ENCODE measurements at regions of chr19 and their contacts with region 1.

Region 1: DNA sequence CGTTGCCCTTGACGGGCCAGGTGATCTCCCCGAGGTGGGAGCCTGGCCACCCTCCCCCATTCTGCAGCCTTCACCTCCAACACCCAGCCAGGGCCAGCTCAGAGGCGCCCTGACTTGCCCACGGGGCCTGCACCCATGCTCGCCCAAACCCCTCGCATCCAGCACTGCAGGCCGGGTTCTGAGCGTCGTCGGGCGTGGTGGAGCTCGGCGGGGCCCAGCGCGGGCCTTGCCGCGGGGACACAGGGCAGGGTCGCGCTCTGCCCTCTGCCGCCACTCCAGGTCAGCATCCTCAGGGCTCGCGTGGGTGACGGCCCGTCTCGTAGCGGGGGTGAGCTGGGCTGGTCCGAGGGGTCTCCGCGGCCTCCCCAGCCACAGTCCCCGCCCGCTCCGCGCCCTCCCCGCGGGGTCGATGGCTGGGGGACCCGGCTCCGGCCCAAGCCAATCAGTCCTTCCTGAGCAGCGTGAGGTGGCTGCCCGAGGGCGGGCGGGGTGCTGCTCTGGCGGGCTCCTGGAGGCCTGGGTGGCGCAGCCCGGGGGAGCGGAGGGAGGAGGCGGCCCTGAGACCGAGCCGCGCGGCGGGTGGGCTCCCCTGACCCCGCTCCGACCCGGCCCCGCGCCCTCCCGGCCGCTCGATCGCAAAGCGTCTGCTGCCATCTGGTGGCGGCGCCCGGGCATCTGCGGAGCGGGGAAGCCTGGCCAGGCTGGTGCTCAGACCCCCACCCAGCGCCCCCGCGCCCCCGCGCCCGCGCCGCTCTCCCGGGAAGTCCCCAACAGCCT is 61.4 kb downstream of the CCNE1 start:
- DNase-seq: peak; percentile 72
- ATAC-seq: peak; percentile 84
- H3K4me3 Mint-ChIP-seq: peak overlapping the region; percentile 59
- H3K27ac Mint-ChIP-seq: no peak overlapping the region
- H3K4me1 Mint-ChIP-seq: peaks cover 10% of the 10 kb centered on the region
- H3K27me3 Mint-ChIP-seq: peaks cover 13% of the 10 kb centered on the region
- CTCF ChIP-seq: peak; percentile 98

Region 2: DNA sequence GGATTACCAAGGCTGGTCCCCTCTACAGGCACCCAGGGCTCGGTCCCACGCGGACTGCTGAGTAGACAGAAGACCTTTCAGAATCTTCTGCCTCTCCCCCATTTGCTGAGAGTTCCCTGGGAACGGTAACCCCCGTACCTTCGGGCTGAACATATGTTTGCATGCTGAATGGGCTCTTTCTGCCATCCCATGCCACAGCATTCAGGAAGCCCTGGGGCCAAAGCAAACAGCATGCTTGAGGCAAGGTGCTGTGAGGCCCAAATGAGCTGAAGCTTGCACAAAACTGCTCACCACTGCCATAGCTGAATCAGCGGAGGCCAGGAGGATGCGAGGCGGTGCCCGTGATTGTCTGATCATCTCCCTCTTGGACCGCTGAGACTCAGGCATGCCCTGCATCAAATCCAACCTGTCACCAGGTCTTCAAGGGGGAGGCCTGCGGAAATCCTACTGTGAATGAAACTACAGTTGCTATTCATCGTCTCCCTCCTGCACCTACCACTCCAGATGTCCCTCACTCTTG is 141.8 kb before region 1 on chr19:
- CTCF ChIA-PET with region 1: interaction called, 69 read pairs
- POLR2A ChIA-PET with region 1: no interaction called
- intact Hi-C with region 1: loop called (anchors 5 kb)
- DNase-seq: no peak
- ATAC-seq: no peak
- H3K4me3 Mint-ChIP-seq: no peak overlapping the region
- H3K27ac Mint-ChIP-seq: no peak overlapping the region
- H3K4me1 Mint-ChIP-seq: no peaks in the 10 kb centered on the region
- H3K27me3 Mint-ChIP-seq: peaks cover 2% of the 10 kb centered on the region
- CTCF ChIP-seq: no peak

Region 3: GRCh38 chr19:29761575-29762232 is 111.5 kb before region 1 on chr19:
- CTCF ChIA-PET with region 1: interaction called, 78 read pairs
- POLR2A ChIA-PET with region 1: interaction called, 3 read pairs
- intact Hi-C with region 1: loop called (anchors 10 kb)
- DNase-seq: no peak
- ATAC-seq: no peak
- H3K4me3 Mint-ChIP-seq: no peak overlapping the region
- H3K27ac Mint-ChIP-seq: no peak overlapping the region
- H3K4me1 Mint-ChIP-seq: peaks cover 2% of the 10 kb centered on the region
- H3K27me3 Mint-ChIP-seq: no peaks in the 10 kb centered on the region
- CTCF ChIP-seq: no peak

Region 4: GRCh38 chr19:29771708-29772414 is 101.4 kb before region 1 on chr19:
- CTCF ChIA-PET with region 1: interaction called, 14 read pairs
- POLR2A ChIA-PET with region 1: no interaction called
- intact Hi-C with region 1: loop called (anchors 10 kb)
- DNase-seq: peak; percentile 34
- ATAC-seq: no peak
- H3K4me3 Mint-ChIP-seq: no peak overlapping the region
- H3K27ac Mint-ChIP-seq: no peak overlapping the region
- H3K4me1 Mint-ChIP-seq: no peaks in the 10 kb centered on the region
- H3K27me3 Mint-ChIP-seq: peaks cover 2% of the 10 kb centered on the region
- CTCF ChIP-seq: peak; percentile 47

Region 5: GRCh38 chr19:29785955-29786589 is 87.1 kb before region 1 on chr19:
- CTCF ChIA-PET with region 1: interaction called, 15 read pairs
- POLR2A ChIA-PET with region 1: interaction called, 3 read pairs
- intact Hi-C with region 1: no loop called
- DNase-seq: peak; percentile 35
- ATAC-seq: peak; percentile 68
- H3K4me3 Mint-ChIP-seq: no peak overlapping the region
- H3K27ac Mint-ChIP-seq: no peak overlapping the region
- H3K4me1 Mint-ChIP-seq: no peaks in the 10 kb centered on the region
- H3K27me3 Mint-ChIP-seq: no peaks in the 10 kb centered on the region
- CTCF ChIP-seq: no peak

Region 6: DNA sequence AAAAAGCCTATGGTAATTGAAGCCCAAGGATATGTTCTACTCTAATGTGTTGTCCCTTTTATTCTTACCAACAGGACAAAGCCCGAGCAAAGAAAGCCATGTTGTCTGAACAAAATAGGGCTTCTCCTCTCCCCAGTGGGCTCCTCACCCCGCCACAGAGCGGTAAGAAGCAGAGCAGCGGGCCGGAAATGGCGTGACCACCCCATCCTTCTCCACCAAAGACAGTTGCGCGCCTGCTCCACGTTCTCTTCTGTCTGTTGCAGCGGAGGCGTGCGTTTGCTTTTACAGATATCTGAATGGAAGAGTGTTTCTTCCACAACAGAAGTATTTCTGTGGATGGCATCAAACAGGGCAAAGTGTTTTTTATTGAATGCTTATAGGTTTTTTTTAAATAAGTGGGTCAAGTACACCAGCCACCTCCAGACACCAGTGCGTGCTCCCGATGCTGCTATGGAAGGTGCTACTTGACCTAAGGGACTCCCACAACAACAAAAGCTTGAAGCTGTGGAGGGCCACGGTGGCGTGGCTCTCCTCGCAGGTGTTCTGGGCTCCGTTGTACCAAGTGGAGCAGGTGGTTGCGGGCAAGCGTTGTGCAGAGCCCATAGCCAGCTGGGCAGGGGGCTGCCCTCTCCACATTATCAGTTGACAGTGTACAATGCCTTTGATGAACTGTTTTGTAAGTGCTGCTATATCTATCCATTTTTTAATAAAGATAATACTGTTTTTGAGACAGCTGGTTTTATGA is 49.5 kb before region 1 on chr19:
- CTCF ChIA-PET with region 1: no interaction called
- POLR2A ChIA-PET with region 1: no interaction called
- intact Hi-C with region 1: no loop called
- DNase-seq: no peak
- ATAC-seq: no peak
- H3K4me3 Mint-ChIP-seq: no peak overlapping the region
- H3K27ac Mint-ChIP-seq: no peak overlapping the region
- H3K4me1 Mint-ChIP-seq: peaks cover 4% of the 10 kb centered on the region
- H3K27me3 Mint-ChIP-seq: no peaks in the 10 kb centered on the region
- CTCF ChIP-seq: no peak

Region 7: DNA sequence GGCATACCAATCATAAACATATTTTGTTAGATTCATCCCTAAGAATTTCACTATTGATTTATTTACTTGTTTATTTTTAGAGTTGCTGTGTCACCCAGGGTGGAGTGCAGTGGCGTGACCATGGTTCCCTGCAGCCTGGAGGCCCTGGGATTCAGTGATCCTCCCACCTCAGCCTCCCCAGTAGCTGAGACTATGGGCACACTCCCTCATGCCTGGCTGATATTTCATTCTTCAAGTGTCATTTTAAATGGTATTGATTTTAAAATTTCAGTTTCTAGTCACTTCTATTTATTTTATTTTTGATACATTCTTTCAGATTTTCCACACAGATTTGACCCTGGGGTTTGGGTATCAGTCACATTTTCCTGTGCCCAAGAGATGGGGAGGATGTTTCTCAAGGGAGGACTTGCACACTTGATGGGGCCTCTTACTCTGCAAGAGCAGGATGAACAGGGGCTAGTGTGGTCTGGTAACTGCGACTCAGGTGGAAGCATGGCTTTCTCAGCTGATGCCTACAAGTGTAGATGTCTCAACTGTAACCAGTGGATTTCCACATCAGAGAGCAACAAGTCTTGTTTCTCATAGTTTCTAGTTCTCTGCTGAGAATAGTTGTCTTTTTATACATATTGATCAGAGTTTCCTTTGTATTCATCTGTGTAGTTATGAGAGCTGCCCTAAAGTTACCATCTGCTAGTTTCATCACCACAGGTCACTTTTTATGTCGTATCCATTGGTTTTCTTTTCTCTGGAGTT is 21.3 kb before region 1 on chr19:
- CTCF ChIA-PET with region 1: interaction called, 35 read pairs
- POLR2A ChIA-PET with region 1: no interaction called
- intact Hi-C with region 1: no loop called
- DNase-seq: peak; percentile 75
- ATAC-seq: peak; percentile 98
- H3K4me3 Mint-ChIP-seq: no peak overlapping the region
- H3K27ac Mint-ChIP-seq: peak overlapping the region; percentile 82
- H3K4me1 Mint-ChIP-seq: peaks cover 17% of the 10 kb centered on the region
- H3K27me3 Mint-ChIP-seq: no peaks in the 10 kb centered on the region
- CTCF ChIP-seq: no peak

Region 8: DNA sequence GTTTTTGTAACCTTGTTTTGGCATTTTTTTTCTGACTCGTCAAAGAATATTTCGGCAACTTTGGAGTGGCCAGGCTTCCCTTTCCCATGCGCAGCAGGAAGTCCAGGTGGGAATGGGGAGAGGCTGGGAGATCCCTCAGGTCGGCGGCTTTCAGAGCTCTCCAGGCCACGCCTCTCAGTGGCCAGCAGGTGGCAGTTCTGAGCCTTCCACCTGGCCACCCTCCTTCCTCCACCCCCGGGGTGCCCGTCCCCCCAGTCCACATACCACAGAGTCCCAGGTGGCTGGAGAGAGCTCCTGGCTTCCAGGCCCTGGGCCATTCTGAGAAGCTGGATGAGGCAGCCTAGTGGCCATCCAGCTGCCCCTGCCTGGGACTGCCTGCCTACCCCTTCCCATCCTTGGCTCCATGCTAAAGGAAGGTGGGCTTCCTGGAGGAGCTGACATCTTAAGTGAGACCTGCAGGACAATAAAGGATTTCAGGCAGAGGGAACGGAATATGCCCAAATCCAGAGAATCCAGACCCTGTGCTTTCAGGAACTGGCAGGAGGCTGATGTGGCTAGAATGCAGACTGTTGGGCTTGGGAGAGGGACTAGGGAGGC is 15.1 kb before region 1 on chr19:
- CTCF ChIA-PET with region 1: interaction called, 35 read pairs
- POLR2A ChIA-PET with region 1: interaction called, 3 read pairs
- intact Hi-C with region 1: no loop called
- DNase-seq: peak; percentile 55
- ATAC-seq: peak; percentile 89
- H3K4me3 Mint-ChIP-seq: no peak overlapping the region
- H3K27ac Mint-ChIP-seq: no peak overlapping the region
- H3K4me1 Mint-ChIP-seq: peaks cover 3% of the 10 kb centered on the region
- H3K27me3 Mint-ChIP-seq: peaks cover 3% of the 10 kb centered on the region
- CTCF ChIP-seq: peak; percentile 75

Region 9: DNA sequence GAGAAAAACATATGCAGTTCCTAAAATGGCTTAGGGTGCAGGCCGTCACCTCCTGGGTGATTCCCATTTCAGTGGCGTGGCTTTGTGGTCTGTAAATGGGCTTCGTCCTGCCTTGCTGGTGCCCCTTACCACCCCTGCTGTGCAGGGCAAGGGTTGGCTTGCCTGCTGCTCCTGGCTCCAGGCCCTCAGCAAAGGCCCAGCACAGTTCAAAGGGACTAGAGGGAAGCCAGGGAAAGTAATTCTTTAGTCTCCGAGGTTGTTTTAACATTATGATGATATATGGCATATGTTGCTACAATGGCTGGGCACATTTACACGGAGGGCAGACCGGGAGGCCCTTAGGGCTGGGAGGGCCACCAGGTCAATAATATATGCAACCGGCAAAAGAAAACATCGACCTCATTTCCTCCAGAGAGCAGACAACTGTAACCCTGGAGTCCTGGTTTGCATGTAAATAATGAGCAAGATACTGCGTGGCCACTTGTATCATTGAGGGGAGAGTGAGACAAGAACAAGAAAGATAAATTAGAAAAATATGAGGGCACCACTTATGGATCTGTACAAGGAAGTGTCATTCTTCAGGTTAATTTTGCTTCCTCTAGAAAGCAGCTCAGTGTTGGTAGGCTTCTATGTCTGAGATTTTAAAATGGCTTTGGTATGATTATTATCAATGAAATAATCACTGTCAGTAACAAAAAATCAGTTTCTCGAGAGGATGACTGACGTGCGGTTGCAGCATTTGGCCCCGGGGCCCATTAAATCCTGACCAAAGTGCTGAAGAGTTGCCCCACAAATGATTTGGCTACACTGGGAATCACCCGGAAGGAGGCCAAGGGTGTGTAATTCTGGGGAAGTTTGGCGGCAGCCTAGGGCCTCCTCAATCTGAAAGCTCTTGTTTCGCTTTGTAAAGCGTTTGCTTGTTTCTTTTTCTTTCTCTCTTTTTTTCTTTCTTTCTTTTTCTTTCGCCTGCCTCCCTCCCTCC is 36.0 kb after region 1 on chr19:
- CTCF ChIA-PET with region 1: no interaction called
- POLR2A ChIA-PET with region 1: no interaction called
- intact Hi-C with region 1: no loop called
- DNase-seq: no peak
- ATAC-seq: no peak
- H3K4me3 Mint-ChIP-seq: no peak overlapping the region
- H3K27ac Mint-ChIP-seq: no peak overlapping the region
- H3K4me1 Mint-ChIP-seq: no peaks in the 10 kb centered on the region
- H3K27me3 Mint-ChIP-seq: no peaks in the 10 kb centered on the region
- CTCF ChIP-seq: no peak